Endothelial cell of umbilical vein (primary cell): ENCODE measurements at regions of chr19 and their contacts with region 1.

Region 1: DNA sequence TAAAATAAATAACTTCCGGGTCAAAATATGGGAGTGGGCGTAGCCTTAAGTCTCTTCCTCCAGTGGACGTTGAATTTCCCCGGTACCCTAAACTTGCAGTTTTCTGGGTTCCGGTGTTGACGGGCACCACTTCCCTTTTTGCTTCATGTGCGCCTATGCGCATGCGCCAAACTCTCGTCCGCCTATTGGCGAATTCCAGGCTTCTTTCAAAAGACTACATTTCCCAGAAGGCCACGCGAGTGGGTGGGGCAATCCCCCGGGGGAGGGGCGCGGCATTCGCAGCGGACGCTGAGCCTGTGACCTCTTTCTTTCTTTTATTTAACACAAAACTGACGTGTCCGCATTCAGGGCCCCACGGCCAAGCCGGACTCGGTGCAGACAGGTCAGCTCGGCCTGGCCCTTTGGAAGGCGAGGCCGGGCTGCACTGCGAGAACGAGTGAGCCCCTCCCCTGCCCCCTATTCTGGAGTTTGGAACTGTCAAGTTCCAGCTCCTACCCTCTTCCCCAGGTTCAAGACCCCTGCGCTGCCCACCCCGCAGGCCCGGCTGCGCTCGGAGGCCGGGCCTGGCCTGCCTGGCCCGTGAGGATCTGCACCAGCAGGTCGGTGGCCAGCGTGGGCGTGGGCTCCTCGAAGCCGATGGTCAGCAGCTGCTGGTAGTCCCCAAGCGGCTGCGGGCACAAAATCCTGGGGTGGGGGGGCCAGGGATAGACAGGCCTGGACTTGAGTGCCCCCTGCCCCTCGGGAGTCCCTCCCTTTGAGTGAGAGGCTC is 4.1 kb downstream of the C19orf67 start:
- DNase-seq: peak; percentile 100
- H3K4me3 ChIP-seq: peak overlapping the region; percentile 59 to 77 (median 69)
- H3K27ac ChIP-seq: peak overlapping the region; percentile 66
- H3K4me1 ChIP-seq: peaks cover 12% of the 10 kb centered on the region
- H3K27me3 ChIP-seq: no peaks in the 10 kb centered on the region
- CTCF ChIP-seq: no peak
- POLR2A ChIP-seq: peak; percentile 97

Region 2: DNA sequence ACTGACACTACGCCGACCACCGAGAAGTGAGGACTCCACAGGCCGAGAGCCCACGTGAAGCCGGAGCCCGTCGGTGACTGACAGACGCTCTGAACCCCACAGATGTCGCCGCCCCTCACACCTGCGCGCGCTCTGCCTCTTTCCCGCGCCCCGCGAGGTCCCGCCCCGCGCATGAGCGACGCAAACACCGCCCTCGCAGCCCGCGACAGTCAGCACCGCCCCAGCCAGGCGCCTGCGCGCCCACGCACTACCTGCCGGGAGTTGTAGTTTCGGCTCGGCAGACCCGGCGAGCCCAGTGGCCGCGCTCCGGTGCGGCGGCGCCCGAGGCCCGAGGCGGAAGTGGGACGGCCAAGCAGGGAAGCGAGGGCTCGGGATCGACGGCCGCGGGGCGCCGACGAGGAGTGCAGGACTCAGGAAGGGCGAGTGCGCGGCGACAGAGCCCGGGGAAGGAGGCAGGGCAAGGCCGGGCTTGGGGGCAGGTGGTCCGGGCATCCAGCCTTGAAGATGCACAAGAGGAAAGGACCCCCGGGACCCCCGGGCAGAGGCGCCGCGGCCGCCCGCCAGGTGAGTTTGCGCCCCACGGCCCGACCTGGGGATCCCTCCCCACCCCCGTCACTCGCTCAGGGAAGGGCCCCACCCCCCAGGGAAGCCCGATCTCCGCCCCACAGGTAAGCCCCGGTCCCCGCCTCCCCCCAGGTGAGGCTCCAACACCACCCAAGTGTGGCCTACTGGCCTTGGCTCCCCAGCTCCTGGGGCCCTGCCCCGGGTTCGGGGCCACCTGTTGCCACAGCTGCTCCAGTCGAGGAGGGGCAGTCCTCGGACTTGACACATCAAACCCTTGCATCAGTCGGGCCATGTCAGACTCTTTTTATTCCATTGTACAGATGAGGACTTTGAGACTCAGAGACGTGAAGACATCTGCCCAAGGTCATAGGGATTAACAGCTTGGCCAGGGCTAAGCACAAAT is 175.3 kb before region 1 on chr19 and contains the starts of genes BRME1 and CC2D1A:
- CTCF ChIA-PET with region 1: no interaction called
- POLR2A ChIA-PET with region 1: no interaction called
- dilution Hi-C with region 1: no loop called
- intact Hi-C with region 1: loop called (anchors 1 kb)
- DNase-seq: peak; percentile 85
- H3K4me3 ChIP-seq: peak within 1 kb of the TSS; percentile 78 to 88 (median 85)
- H3K27ac ChIP-seq: peak within 1 kb of the TSS; percentile 45
- H3K4me1 ChIP-seq: peaks cover 7% of the 10 kb centered on the region
- H3K27me3 ChIP-seq: no peaks in the 10 kb centered on the region
- CTCF ChIP-seq: no peak
- POLR2A ChIP-seq: no peak
- total RNA-seq, gene BRME1: 1.5 and 2.5 TPM in 2 replicates
- total RNA-seq, gene CC2D1A: 29.8 and 33.7 TPM in 2 replicates

Region 3: DNA sequence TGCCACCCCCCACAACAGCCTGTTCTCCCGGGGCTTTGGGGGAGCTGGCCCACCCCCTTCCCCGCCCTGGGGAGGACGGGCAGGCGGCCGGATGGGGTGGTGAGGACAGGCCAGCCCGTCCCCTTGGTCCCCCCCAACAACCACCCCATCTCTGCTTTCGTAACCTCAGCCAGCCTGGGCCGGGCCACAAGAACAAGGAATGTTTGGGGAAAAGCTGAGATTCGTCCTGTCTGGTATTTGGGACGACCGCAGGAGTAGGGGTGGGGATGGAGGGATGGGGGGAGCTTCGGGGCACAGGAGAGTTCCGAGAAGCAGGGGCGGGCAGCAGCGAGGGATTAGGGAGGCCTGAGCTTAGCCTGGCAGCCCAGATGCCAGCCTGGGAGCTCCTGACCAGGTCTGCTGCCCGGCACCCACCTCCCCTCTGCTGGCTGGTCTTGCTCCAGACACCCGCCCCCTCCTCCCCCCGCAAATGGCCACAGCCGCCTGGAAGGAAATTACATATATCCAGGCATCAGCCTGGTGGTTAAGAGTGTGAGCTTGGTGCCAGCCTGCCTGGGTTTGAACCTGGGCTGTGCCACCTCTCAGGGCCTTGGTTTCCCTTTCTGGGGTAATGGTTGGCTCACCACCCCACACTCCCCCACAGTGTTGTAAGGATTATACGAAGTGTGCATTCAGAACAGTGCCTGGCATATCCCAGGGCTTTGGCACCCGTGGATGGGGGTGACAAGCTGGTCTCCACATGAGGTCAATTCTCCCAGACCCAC is 143.0 kb before region 1 on chr19 and contains the start of gene PODNL1:
- CTCF ChIA-PET with region 1: no interaction called
- POLR2A ChIA-PET with region 1: no interaction called
- dilution Hi-C with region 1: no loop called
- intact Hi-C with region 1: no loop called
- DNase-seq: no peak
- H3K4me3 ChIP-seq: no peak within 1 kb of the TSS
- H3K27ac ChIP-seq: no peak within 1 kb of the TSS
- H3K4me1 ChIP-seq: no peaks in the 10 kb centered on the region
- H3K27me3 ChIP-seq: peaks cover 0 to 3% of the 10 kb centered on the region in 2 experiments
- CTCF ChIP-seq: no peak
- POLR2A ChIP-seq: no peak
- total RNA-seq, gene PODNL1: 2.0 TPM in 1 of 2 replicates, not detected in the other

Region 4: GRCh38 chr19:14214580-14214979 is 133.1 kb after region 1 on chr19:
- CTCF ChIA-PET with region 1: no interaction called
- POLR2A ChIA-PET with region 1: no interaction called
- dilution Hi-C with region 1: no loop called
- intact Hi-C with region 1: no loop called
- DNase-seq: no peak
- H3K4me3 ChIP-seq: no peak overlapping the region
- H3K27ac ChIP-seq: no peak overlapping the region
- H3K4me1 ChIP-seq: no peaks in the 10 kb centered on the region
- H3K27me3 ChIP-seq: peaks cover 3 to 6% of the 10 kb centered on the region in 2 experiments
- CTCF ChIP-seq: no peak
- POLR2A ChIP-seq: no peak

Region 5: GRCh38 chr19:14237014-14237941 is 155.8 kb after region 1 on chr19:
- CTCF ChIA-PET with region 1: no interaction called
- POLR2A ChIA-PET with region 1: no interaction called
- dilution Hi-C with region 1: no loop called
- intact Hi-C with region 1: no loop called
- DNase-seq: no peak
- H3K4me3 ChIP-seq: no peak overlapping the region
- H3K27ac ChIP-seq: no peak overlapping the region
- H3K4me1 ChIP-seq: no peaks in the 10 kb centered on the region
- H3K27me3 ChIP-seq: no peaks in the 10 kb centered on the region
- CTCF ChIP-seq: no peak
- POLR2A ChIP-seq: no peak